ENCODE measurements at regions of chr7 and their contacts with region 1.

Region 1: DNA sequence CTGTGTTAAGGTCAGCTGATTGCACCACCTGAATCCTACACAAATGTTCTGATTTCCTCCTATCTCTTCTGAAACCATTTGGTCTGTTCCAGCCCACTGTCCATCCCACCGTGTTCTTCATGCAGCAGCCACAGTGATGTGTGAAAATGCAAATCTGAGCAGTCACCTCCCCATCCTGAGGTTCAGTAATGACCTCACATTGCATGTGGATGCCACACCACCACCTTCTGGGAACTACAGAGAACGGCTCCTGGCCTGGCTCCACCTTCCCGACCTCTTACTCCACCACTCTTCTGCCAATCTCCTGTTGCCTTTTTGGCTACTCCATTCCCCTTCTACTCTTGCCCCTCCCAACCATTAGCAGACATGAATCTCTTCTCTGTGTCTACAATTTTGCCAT is 244.4 kb downstream of the TNS3 start:
- DNase-seq: peak; percentile 34 to 77
- ATAC-seq: peak; percentile 28 to 65
- H3K4me3 ChIP-seq: no peak overlapping the region
- H3K27ac ChIP-seq: peak overlapping the region; percentile 77 to 88 (median 86)
- H3K4me1 ChIP-seq: peaks cover 28 to 29% of the 10 kb centered on the region in 2 donors
- H3K27me3 ChIP-seq: no peaks in the 10 kb centered on the region
- CTCF ChIP-seq: peak in 1 of 5 experiments; percentile 17
- POLR2A ChIP-seq: no peak

Region 2: GRCh38 chr7:47008461-47008860 is 329.1 kb before region 1 on chr7:
- in situ Hi-C with region 1: no loop called
- intact Hi-C with region 1: no loop called
- DNase-seq: no peak
- ATAC-seq: no peak
- H3K4me3 ChIP-seq: no peak overlapping the region
- H3K27ac ChIP-seq: no peak overlapping the region
- H3K4me1 ChIP-seq: no peaks in the 10 kb centered on the region
- H3K27me3 ChIP-seq: no peaks in the 10 kb centered on the region
- CTCF ChIP-seq: no peak
- POLR2A ChIP-seq: no peak

Region 3: GRCh38 chr7:47266131-47266706 is 71.3 kb before region 1 on chr7:
- in situ Hi-C with region 1: no loop called
- intact Hi-C with region 1: loop called (anchors 2 kb)
- DNase-seq: peak; percentile 29 to 55
- ATAC-seq: peak; percentile 82 to 89
- H3K4me3 ChIP-seq: no peak overlapping the region
- H3K27ac ChIP-seq: peak overlapping the region in 3 of 4 donors; percentile 32 to 66 (median 55)
- H3K4me1 ChIP-seq: peaks cover 4 to 12% of the 10 kb centered on the region in 2 donors
- H3K27me3 ChIP-seq: no peaks in the 10 kb centered on the region
- CTCF ChIP-seq: peak; percentile 90 to 96 (median 93)
- POLR2A ChIP-seq: no peak

Region 4: GRCh38 chr7:47283507-47284131 is 53.9 kb before region 1 on chr7:
- in situ Hi-C with region 1: no loop called
- intact Hi-C with region 1: no loop called
- DNase-seq: no peak
- ATAC-seq: no peak
- H3K4me3 ChIP-seq: no peak overlapping the region
- H3K27ac ChIP-seq: no peak overlapping the region
- H3K4me1 ChIP-seq: peaks cover 0 to 3% of the 10 kb centered on the region in 2 donors
- H3K27me3 ChIP-seq: no peaks in the 10 kb centered on the region
- CTCF ChIP-seq: no peak
- POLR2A ChIP-seq: no peak

Region 5: DNA sequence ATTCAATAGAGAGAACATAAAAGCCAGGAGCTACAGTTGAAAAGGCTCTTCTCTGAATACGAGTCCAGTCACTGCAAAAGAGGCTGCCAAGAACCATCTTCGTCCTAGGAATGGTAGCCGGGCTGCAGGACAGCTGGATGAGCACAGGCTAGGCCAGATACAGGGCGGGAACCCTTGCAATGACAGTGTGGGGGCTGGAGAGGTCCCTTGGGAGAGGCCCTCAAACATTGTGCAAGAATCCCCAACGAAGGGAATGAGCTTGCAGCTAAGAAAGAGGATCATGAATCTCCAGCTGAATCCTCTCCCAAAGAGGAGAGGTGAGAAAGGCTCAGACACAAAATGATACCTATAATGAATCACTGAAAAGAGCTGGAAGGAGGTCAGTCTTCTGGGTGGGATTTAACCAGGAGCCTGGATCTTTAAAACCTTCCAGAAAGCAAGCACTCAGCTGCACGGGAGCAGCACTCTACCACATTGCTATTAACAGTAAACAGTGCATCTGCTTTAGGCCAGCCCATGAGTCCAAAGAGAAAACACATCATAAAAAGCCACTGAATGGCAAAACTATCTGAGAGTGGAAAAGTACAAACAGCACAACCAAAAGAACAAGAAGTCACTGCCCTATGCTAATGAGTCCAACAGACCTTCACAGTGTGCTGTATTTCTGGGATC is 43.5 kb before region 1 on chr7:
- in situ Hi-C with region 1: no loop called
- intact Hi-C with region 1: loop called (anchors 2 kb)
- DNase-seq: peak in 1 of 2 donors; percentile 72
- ATAC-seq: peak; percentile 34 to 59
- H3K4me3 ChIP-seq: no peak overlapping the region
- H3K27ac ChIP-seq: peak overlapping the region; percentile 78 to 87 (median 82)
- H3K4me1 ChIP-seq: peaks cover 41 to 56% of the 10 kb centered on the region in 2 donors
- H3K27me3 ChIP-seq: no peaks in the 10 kb centered on the region
- CTCF ChIP-seq: no peak
- POLR2A ChIP-seq: peak in 1 of 2 donors; percentile 3

Region 6: GRCh38 chr7:47371729-47372368 is 34.3 kb after region 1 on chr7:
- in situ Hi-C with region 1: no loop called
- intact Hi-C with region 1: loop called (anchors 2 kb)
- DNase-seq: peak in 1 of 2 donors; percentile 35
- ATAC-seq: no peak
- H3K4me3 ChIP-seq: no peak overlapping the region
- H3K27ac ChIP-seq: no peak overlapping the region
- H3K4me1 ChIP-seq: peaks cover 31 to 36% of the 10 kb centered on the region in 2 donors
- H3K27me3 ChIP-seq: no peaks in the 10 kb centered on the region
- CTCF ChIP-seq: no peak
- POLR2A ChIP-seq: no peak

Region 7: GRCh38 chr7:47444379-47445057 is 107.0 kb after region 1 on chr7:
- in situ Hi-C with region 1: no loop called
- intact Hi-C with region 1: no loop called
- DNase-seq: no peak
- ATAC-seq: peak in 1 of 2 donors; percentile 29
- H3K4me3 ChIP-seq: no peak overlapping the region
- H3K27ac ChIP-seq: peak overlapping the region; percentile 91 to 98 (median 94)
- H3K4me1 ChIP-seq: peaks cover 70 to 73% of the 10 kb centered on the region in 2 donors
- H3K27me3 ChIP-seq: no peaks in the 10 kb centered on the region
- CTCF ChIP-seq: peak; percentile 46 to 66 (median 59)
- POLR2A ChIP-seq: no peak